Sciatic nerve (tissue), 2 donors: ENCODE measurements at regions of chr14 and their contacts with region 1.

Region 1: DNA sequence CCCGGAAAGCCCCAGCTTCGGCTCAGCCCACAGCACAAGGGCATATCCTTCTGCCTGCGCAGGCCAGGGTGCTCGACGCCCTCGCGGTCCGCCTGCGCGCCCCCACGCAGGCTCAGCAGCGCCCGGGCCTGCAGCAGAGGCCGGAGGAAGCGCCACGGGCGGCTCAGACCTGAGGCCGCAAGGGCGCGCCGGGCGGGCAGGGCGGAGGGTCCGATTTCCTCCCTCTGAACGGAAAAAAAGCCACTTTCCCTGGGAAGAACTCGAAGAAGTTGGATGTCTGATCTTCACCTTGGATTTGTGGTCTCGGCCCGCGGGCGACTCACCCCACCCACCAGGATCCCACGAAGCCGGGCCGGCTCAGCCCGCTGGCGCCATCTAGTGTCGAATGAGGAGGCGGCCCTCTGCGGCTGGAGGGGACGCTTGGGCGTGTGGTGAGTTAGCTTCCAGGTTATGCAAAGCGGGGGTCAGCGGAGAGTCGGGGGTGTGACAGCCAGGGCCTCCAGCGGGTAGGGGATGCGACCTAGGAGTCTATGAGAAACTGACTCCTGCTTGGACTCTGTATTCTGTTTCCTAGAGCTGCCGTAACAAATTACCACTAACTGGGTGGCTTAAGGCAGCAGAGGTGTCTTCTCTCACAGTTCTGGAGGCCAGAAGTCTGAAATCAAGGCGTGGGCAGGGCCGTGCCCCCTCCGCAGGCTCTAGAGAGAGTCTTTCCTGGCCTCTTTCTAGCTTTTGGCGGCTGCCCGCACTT is 40.0 kb upstream of the SRSF5 start:
- DNase-seq: peak; percentile 93
- ATAC-seq: peak; percentile 97

Region 2: GRCh38 chr14:69586404-69586803 is 140.5 kb before region 1 on chr14:
- intact Hi-C with region 1: loop called (anchors 5 kb)
- DNase-seq: no peak
- ATAC-seq: peak; percentile 20

Region 3: GRCh38 chr14:69600304-69600891 is 126.5 kb before region 1 on chr14:
- intact Hi-C with region 1: loop called (anchors 5 kb)
- DNase-seq: no peak
- ATAC-seq: no peak

Region 4: GRCh38 chr14:69715725-69716477 is 11.0 kb before region 1 on chr14:
- intact Hi-C with region 1: no loop called
- DNase-seq: peak; percentile 79
- ATAC-seq: peak; percentile 64

Region 5: GRCh38 chr14:69972755-69973154 is 245.8 kb after region 1 on chr14:
- intact Hi-C with region 1: no loop called
- DNase-seq: no peak
- ATAC-seq: peak; percentile 30